Vagina (tissue), 2 donors: ENCODE measurements at regions of chr5 and their contacts with region 1.

Region 1: DNA sequence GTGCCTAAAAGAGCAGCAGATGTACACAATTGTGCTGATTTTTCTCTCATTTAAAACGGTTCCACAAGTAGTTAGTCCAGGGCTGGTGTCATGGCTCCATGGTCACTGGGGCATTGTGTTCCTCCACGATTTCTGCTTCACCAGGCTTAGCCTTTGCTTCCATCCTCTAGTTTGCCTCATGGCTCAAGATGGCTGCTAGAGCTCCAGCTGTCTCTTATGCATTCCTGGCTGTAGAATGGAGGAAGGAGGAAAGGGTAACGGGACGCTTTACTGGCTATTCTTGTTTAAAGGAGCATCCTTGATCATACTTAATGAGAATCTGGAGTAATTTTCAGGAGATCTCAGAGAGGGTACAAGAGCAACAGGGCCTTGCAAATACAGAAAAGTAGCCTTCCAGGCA is 47.7 kb downstream of the BOD1 start:
- DNase-seq: no peak
- H3K4me3 ChIP-seq: no peak overlapping the region
- H3K27ac ChIP-seq: no peak overlapping the region
- H3K4me1 ChIP-seq: peaks cover 9% of the 10 kb centered on the region
- H3K27me3 ChIP-seq: no peaks in the 10 kb centered on the region
- CTCF ChIP-seq: no peak
- POLR2A ChIP-seq: no peak

Region 2: GRCh38 chr5:173547579-173547978 is 21.1 kb before region 1 on chr5:
- intact Hi-C with region 1: loop called (anchors 1 kb)
- DNase-seq: no peak
- H3K4me3 ChIP-seq: no peak overlapping the region
- H3K27ac ChIP-seq: no peak overlapping the region
- H3K4me1 ChIP-seq: no peaks in the 10 kb centered on the region
- H3K27me3 ChIP-seq: no peaks in the 10 kb centered on the region
- CTCF ChIP-seq: no peak
- POLR2A ChIP-seq: no peak